IMR-90 (cell line): ENCODE measurements at regions of chr5 and their contacts with region 1.

Region 1: GRCh38 chr5:72860499-72860898 is 44.0 kb downstream of the TNPO1 start:
- DNase-seq: peak; percentile 76
- ATAC-seq: peak; percentile 73; the same call in 1 of the 2 replicates
- H3K4me3 ChIP-seq: no peak overlapping the region
- H3K27ac ChIP-seq: no peak overlapping the region
- H3K4me1 ChIP-seq: peaks cover 6% of the 10 kb centered on the region
- H3K27me3 ChIP-seq: no peaks in the 10 kb centered on the region
- CTCF ChIP-seq: no peak
- POLR2A ChIP-seq: no peak
- RAD21 ChIP-seq: no peak

Region 2: GRCh38 chr5:71922584-71923106 is 937.9 kb before region 1 on chr5:
- CTCF ChIA-PET with region 1: no interaction called
- POLR2A ChIA-PET with region 1: no interaction called
- dilution Hi-C with region 1: no loop called
- in situ Hi-C with region 1: no loop called
- intact Hi-C with region 1: no loop called
- DNase-seq: peak; percentile 64
- ATAC-seq: no peak
- H3K4me3 ChIP-seq: no peak overlapping the region
- H3K27ac ChIP-seq: no peak overlapping the region
- H3K4me1 ChIP-seq: peaks cover 2% of the 10 kb centered on the region
- H3K27me3 ChIP-seq: peaks cover 2% of the 10 kb centered on the region; the same call in 1 of the 2 replicates
- CTCF ChIP-seq: 0 out of 2 replicates have a peak, but pooled peaks have one; percentile 1
- POLR2A ChIP-seq: no peak
- RAD21 ChIP-seq: no peak

Region 3: GRCh38 chr5:72895758-72896157 is 35.3 kb after region 1 on chr5:
- CTCF ChIA-PET with region 1: no interaction called
- POLR2A ChIA-PET with region 1: no interaction called
- dilution Hi-C with region 1: no loop called
- in situ Hi-C with region 1: no loop called
- intact Hi-C with region 1: loop called (anchors 5 kb)
- DNase-seq: no peak
- ATAC-seq: no peak
- H3K4me3 ChIP-seq: no peak overlapping the region
- H3K27ac ChIP-seq: no peak overlapping the region
- H3K4me1 ChIP-seq: no peaks in the 10 kb centered on the region
- H3K27me3 ChIP-seq: no peaks in the 10 kb centered on the region
- CTCF ChIP-seq: no peak
- POLR2A ChIP-seq: no peak
- RAD21 ChIP-seq: no peak

Region 4: DNA sequence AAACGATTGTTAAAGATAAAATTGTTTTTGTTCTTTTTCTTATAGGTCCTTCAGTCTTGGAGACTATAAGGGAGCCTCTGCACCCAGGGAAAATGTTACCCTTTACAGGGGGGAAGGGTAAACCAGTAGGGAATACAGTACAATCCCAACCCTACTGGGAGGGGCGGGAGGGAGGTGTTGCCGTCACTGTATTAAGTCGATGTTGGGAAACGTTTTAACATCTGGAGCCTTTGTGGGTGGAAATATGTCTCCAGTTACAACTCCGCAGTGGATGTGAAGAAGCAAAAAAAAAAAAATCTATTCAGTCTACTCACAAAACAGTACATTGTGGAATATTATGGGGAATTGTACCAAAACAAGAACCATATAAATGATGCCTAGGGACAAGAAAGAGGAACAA is 48.2 kb after region 1 on chr5:
- CTCF ChIA-PET with region 1: no interaction called
- POLR2A ChIA-PET with region 1: interaction called, 3 read pairs
- dilution Hi-C with region 1: no loop called
- in situ Hi-C with region 1: no loop called
- intact Hi-C with region 1: loop called (anchors 5 kb)
- DNase-seq: no peak
- ATAC-seq: no peak
- H3K4me3 ChIP-seq: no peak overlapping the region
- H3K27ac ChIP-seq: no peak overlapping the region
- H3K4me1 ChIP-seq: no peaks in the 10 kb centered on the region
- H3K27me3 ChIP-seq: no peaks in the 10 kb centered on the region
- CTCF ChIP-seq: no peak
- POLR2A ChIP-seq: no peak
- RAD21 ChIP-seq: no peak